Activated T-helper 1 cell treated with anti-CD3 and anti-CD28 coated beads, Interleukin-12 subunit alpha, Interleukin-12 subunit beta, Interleukin-2, Interleukin-4 antibody, amounts not matched to agents 30 ng/mL and 10 ng/mL and 1 ng/mL, durations not matched to agents 14 hours and 24 hours and 36 hours (primary cell): ENCODE measurements at regions of chrX and their contacts with region 1.

Region 1: GRCh38 chrX:96684339-96685209 is at the start of gene DIAPH2:
- DNase-seq: peak; percentile 69
- H3K4me3 Mint-ChIP-seq: peak within 1 kb of the TSS; percentile 94
- H3K27ac Mint-ChIP-seq: peak within 1 kb of the TSS; percentile 95
- H3K4me1 Mint-ChIP-seq: peaks cover 36% of the 10 kb centered on the region
- H3K27me3 Mint-ChIP-seq: no peaks in the 10 kb centered on the region
- total RNA-seq, gene DIAPH2: 10.8 and 11.6 TPM in 2 replicates

Region 2: GRCh38 chrX:96721354-96721753 is 36.8 kb after region 1 on chrX:
- intact Hi-C with region 1: loop called (anchors 5 kb)
- DNase-seq: no peak
- H3K4me3 Mint-ChIP-seq: no peak overlapping the region
- H3K27ac Mint-ChIP-seq: no peak overlapping the region
- H3K4me1 Mint-ChIP-seq: no peaks in the 10 kb centered on the region
- H3K27me3 Mint-ChIP-seq: no peaks in the 10 kb centered on the region

Region 3: DNA sequence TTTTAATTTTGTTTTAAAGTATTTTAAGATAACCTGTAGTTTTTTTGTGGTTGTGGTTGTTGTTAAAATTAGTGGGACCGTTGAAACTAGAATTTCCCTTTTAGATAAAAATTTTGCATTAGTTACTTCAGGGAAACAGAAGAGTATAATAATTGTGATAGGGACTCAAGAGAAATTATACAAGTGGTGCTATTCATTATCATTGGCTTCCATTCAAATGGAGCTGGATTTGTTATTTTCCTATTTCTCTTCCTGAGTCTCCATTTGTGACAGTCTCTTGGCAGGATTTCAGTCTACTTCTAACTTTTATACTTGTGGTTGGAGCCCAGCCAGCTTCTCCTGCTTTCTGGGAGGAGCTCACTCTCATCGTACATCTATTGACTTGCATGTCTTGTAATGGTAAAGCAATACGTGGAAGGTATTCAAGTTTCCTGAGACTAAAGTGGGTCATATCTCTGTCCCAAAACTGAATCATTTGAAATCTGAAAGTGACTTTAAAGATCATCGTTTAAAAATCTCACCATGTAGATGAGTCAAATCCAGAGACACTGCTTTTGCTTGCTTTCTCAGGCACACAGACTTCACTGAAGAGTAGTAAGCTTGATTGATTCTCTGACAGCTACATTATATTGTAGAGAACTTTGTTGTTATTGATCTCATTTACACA is 354.9 kb after region 1 on chrX:
- intact Hi-C with region 1: loop called (anchors 10 kb)
- DNase-seq: no peak
- H3K4me3 Mint-ChIP-seq: no peak overlapping the region
- H3K27ac Mint-ChIP-seq: peak overlapping the region; percentile 52
- H3K4me1 Mint-ChIP-seq: peaks cover 11% of the 10 kb centered on the region
- H3K27me3 Mint-ChIP-seq: no peaks in the 10 kb centered on the region